GM13977 (cell line): ENCODE measurements at regions of chr18 and their contacts with region 1.

Region 1: GRCh38 chr18:10838553-10838952 is 310.8 kb downstream of the PIEZO2 start:
- DNase-seq: peak; percentile 36
- CTCF ChIP-seq: no peak

Region 2: GRCh38 chr18:10705786-10706185 is 132.8 kb before region 1 on chr18:
- in situ Hi-C with region 1: no loop called
- DNase-seq: no peak
- CTCF ChIP-seq: no peak

Region 3: GRCh38 chr18:10892786-10893185 is 54.2 kb after region 1 on chr18:
- in situ Hi-C with region 1: no loop called
- DNase-seq: no peak
- CTCF ChIP-seq: no peak

Region 4: GRCh38 chr18:11149441-11150270 is 311.1 kb after region 1 on chr18 and contains the start of gene PIEZO2:
- in situ Hi-C with region 1: loop called (anchors 10 kb)
- DNase-seq: peak; percentile 97
- CTCF ChIP-seq: no peak